ENCODE measurements at regions of chr9 and their contacts with region 1.

Region 1: GRCh38 chr9:129868916-129869486 is 33.7 kb downstream of the USP20 start:
- DNase-seq: peak; percentile 67 to 95 (median 94)
- ATAC-seq: peak; percentile 93
- H3K4me3 ChIP-seq: peak overlapping the region; percentile 57
- H3K4me3 Mint-ChIP-seq: peak overlapping the region; percentile 49 to 77 (median 64)
- H3K27ac ChIP-seq: peak overlapping the region; percentile 87
- H3K27ac Mint-ChIP-seq: peak overlapping the region; percentile 88 to 96 (median 94)
- H3K4me1 ChIP-seq: peaks cover 59 to 73% of the 10 kb centered on the region in 2 donors
- H3K4me1 Mint-ChIP-seq: peaks cover 44 to 93% (median 77%) of the 10 kb centered on the region in 7 donors
- H3K27me3 ChIP-seq: no peaks in the 10 kb centered on the region
- H3K27me3 Mint-ChIP-seq: no peaks in the 10 kb centered on the region

Region 2: DNA sequence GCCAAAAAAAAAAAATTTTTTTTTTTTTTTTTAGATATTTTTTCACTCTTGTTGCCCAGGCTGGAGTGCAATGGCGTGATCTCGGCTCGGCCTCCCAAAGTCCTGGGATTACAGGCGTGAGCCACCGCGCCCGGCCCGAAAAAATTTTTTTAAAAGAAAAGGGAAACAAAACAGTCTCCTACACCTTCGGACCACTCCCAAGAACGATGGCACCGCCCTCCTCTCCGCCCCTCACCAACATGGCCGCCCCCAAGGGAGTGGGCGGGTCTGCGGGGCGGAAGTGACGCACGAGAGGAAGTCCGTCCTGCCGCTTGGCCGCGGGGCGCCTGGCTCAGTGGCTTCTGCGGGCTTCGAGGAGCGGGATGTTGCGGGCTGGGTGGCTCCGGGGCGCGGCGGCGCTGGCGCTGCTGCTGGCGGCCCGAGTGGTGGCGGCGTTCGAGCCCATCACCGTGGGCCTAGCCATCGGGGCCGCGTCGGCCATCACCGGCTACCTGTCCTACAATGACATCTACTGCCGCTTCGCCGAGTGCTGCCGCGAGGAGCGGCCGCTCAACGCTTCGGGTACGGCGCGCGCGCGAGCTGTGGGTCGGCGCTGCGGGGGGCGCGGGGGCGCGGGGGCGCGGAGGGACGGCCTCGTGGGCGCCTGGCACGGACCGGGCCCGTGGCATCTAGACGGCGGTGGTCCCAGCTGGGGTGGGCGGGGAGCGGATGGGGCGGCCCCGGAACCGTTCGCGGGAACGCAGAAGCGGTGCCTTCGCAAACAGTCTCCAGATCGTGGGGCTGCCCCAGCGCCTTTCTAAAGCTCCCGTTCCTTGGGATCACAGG is 65.9 kb before region 1 on chr9 and contains the start of gene TOR1B:
- CTCF ChIA-PET with region 1: no interaction called
- POLR2A ChIA-PET with region 1: no interaction called
- intact Hi-C with region 1: loop called in 1 of 2 experiments (anchors 1 kb)
- DNase-seq: peak; percentile 91 to 97 (median 94)
- ATAC-seq: peak; percentile 97
- H3K4me3 ChIP-seq: peak within 1 kb of the TSS; percentile 73
- H3K4me3 Mint-ChIP-seq: peak within 1 kb of the TSS; percentile 87 to 95 (median 90)
- H3K27ac ChIP-seq: peak within 1 kb of the TSS; percentile 79
- H3K27ac Mint-ChIP-seq: peak within 1 kb of the TSS; percentile 85 to 97 (median 94)
- H3K4me1 ChIP-seq: peaks cover 12 to 20% of the 10 kb centered on the region in 2 donors
- H3K4me1 Mint-ChIP-seq: peaks cover 15 to 34% (median 28%) of the 10 kb centered on the region in 7 donors
- H3K27me3 ChIP-seq: no peaks in the 10 kb centered on the region
- H3K27me3 Mint-ChIP-seq: no peaks in the 10 kb centered on the region
- total RNA-seq, gene TOR1B: 16.2 to 30.9 (median 23.9) TPM

Region 3: DNA sequence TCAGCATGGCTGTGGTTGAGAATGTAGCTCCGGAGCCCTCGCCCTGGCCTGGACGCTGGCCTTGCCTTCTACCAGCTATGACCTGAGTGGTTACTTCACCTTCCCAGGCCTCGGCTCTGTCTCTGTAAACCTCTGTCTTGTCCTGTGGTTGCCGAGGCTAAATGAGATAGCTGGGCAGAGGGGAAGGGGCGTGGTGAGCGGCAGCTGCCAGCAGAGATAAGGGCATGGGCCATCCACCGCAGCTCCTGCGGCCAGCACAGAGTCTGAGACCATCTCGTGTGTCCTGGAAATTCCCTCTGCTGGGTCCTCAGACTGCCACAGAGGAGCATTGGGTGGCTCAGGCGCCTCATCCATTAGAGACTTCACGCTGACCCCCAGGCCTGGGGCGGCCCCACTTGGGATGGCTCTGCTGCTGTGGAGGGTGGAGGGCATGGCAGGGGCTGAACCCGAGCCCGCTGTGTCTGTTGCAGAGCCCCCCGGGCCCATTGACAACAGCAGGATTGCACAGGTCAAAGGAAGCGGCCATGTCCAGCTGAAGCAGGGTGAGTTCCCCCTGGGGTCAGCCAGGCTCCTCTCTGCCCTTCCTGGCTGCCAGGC is 10.2 kb after region 1 on chr9:
- CTCF ChIA-PET with region 1: interaction called, 3 read pairs
- POLR2A ChIA-PET with region 1: interaction called, 202 read pairs
- intact Hi-C with region 1: loop called (anchors 1 kb)
- DNase-seq: no peak
- ATAC-seq: peak; percentile 76
- H3K4me3 ChIP-seq: no peak overlapping the region
- H3K4me3 Mint-ChIP-seq: peak overlapping the region in 1 of 10 donors; percentile 40
- H3K27ac ChIP-seq: no peak overlapping the region
- H3K27ac Mint-ChIP-seq: no peak overlapping the region
- H3K4me1 ChIP-seq: peaks cover 8 to 20% of the 10 kb centered on the region in 2 donors
- H3K4me1 Mint-ChIP-seq: peaks cover 4 to 29% (median 16%) of the 10 kb centered on the region in 7 donors
- H3K27me3 ChIP-seq: no peaks in the 10 kb centered on the region
- H3K27me3 Mint-ChIP-seq: no peaks in the 10 kb centered on the region

Region 4: DNA sequence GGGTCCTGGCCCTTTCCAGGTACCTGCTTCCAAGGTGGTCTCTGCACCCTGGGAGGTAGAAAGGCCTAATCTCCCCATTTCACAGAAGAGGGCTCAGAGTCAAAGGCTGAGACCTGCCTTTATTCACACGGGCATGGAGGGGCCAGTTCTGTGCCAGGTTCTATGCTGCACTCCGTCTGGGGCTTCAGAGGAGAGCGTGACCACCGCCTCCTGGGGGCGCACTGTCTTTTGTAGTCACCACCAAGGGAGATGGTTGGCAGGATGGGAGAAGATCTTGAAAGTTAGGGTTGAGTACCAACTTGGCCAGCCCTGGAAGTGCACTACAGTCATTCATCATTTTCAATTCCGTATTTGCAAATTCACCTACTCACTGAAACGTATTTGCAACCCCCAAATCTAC is 771.7 kb after region 1 on chr9:
- CTCF ChIA-PET with region 1: no interaction called
- POLR2A ChIA-PET with region 1: no interaction called
- intact Hi-C with region 1: no loop called
- DNase-seq: no peak
- ATAC-seq: no peak
- H3K4me3 ChIP-seq: no peak overlapping the region
- H3K4me3 Mint-ChIP-seq: no peak overlapping the region
- H3K27ac ChIP-seq: no peak overlapping the region
- H3K27ac Mint-ChIP-seq: no peak overlapping the region
- H3K4me1 ChIP-seq: no peaks in the 10 kb centered on the region
- H3K4me1 Mint-ChIP-seq: no peaks in the 10 kb centered on the region
- H3K27me3 ChIP-seq: no peaks in the 10 kb centered on the region
- H3K27me3 Mint-ChIP-seq: no peaks in the 10 kb centered on the region